Activated CD4-positive, alpha-beta memory T cell treated with anti-CD3 and anti-CD28 coated beads, Interleukin-2, amount 10 ng/mL, durations not matched to agents 7 days and 5 days (primary cell): ENCODE measurements at regions of chr10 and their contacts with region 1.

Region 1: DNA sequence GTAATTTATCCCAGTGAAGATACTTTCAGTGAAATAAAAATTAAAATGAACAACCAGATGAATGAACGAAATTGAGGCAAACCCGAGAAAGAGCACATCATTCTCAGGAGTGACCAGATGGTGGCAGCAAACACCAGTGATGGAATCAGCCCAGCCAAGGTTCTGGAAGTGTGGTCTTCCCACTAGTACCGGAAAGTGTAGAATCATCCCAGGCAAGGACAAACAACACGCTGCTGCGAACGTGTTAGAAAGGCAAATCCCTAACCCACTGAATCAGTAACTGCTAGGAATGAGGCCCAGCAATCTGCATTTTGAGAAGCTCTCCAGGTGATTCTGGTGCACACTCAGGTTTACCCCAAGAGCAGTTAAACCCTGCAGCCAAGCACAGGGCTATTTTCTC is 15.5 kb upstream of the SLC18A3 start:
- DNase-seq: peak; percentile 30
- H3K4me3 Mint-ChIP-seq: no peak overlapping the region
- H3K27ac Mint-ChIP-seq: no peak overlapping the region
- H3K4me1 Mint-ChIP-seq: no peaks in the 10 kb centered on the region
- H3K27me3 Mint-ChIP-seq: no peaks in the 10 kb centered on the region

Region 2: DNA sequence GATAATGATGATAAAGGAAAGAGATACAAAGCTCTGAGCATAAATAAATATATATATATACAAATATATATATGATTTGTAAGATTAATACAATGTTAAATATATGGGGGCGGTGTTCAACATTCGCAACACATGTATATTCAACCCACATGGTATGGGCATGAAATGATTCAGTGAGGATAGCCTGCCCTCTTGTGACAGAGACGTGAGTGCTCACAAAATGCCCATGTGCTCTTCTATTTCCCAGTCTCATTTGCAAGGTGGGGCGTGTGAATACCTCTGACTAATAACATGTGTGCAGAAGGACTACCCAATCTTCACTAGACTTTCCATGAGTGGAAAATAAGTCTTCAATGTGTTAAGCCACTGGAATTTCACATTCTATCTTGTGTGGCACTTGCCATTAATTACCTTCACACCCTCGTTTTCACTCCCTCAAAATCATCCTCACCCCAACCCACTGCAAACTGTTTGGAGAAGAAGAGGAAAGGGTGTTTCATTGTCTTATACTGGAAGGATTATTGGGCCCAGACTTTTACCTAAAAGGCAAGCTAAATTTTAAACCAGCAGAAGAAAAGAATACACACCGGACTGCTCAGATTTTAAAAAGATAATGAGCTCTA is 629.8 kb after region 1 on chr10:
- CTCF ChIA-PET with region 1: interaction called, 11 read pairs
- POLR2A ChIA-PET with region 1: interaction called, 3 read pairs
- DNase-seq: peak; percentile 38
- H3K4me3 Mint-ChIP-seq: no peak overlapping the region
- H3K27ac Mint-ChIP-seq: no peak overlapping the region
- H3K4me1 Mint-ChIP-seq: peaks cover 3% of the 10 kb centered on the region
- H3K27me3 Mint-ChIP-seq: peaks cover 30% of the 10 kb centered on the region